Heart left ventricle (tissue), 16 donors: ENCODE measurements at regions of chr11 and their contacts with region 1.

Region 1: DNA sequence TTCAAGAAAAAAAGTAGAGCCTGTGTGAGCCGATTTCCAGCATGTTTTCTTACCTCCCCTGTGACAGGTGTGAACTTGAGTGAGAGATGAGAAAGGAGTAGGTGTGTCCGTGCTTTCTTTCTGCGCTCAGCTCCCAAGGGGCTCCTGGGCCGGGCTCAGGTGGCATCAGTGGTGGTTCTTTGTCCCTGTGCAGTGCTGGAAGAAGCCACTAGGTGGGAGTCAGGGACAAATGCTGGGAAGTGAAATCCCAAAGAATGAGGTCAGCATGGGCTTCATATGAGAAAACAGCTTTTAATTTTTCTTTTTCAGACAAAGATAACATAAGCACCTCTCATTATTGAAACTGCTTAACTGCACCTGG is 57.8 kb downstream of the PPFIBP2 start:
- DNase-seq: peak in 4 of 5 donors; percentile 51 to 69 (median 60)
- ATAC-seq: peak in 3 of 4 donors; percentile 64 to 78 (median 66)
- H3K4me3 ChIP-seq: no peak overlapping the region
- H3K27ac ChIP-seq: peak overlapping the region in 2 of 12 donors; percentile 3 to 17
- H3K4me1 ChIP-seq: peaks cover 6 to 34% (median 23%) of the 10 kb centered on the region in 12 donors
- H3K27me3 ChIP-seq: peaks cover 0 to 9% (median 0%) of the 10 kb centered on the region in 9 donors
- CTCF ChIP-seq: peak; percentile 87 to 96 (median 94)
- POLR2A ChIP-seq: no peak

Region 2: GRCh38 chr11:7600205-7600775 is 28.7 kb after region 1 on chr11:
- intact Hi-C with region 1: no loop called
- DNase-seq: no peak
- ATAC-seq: peak in 3 of 4 donors; percentile 50 to 68 (median 51)
- H3K4me3 ChIP-seq: no peak overlapping the region
- H3K27ac ChIP-seq: no peak overlapping the region
- H3K4me1 ChIP-seq: peaks cover 0 to 5% (median 0%) of the 10 kb centered on the region in 12 donors
- H3K27me3 ChIP-seq: no peaks in the 10 kb centered on the region
- CTCF ChIP-seq: no peak
- POLR2A ChIP-seq: no peak

Region 3: DNA sequence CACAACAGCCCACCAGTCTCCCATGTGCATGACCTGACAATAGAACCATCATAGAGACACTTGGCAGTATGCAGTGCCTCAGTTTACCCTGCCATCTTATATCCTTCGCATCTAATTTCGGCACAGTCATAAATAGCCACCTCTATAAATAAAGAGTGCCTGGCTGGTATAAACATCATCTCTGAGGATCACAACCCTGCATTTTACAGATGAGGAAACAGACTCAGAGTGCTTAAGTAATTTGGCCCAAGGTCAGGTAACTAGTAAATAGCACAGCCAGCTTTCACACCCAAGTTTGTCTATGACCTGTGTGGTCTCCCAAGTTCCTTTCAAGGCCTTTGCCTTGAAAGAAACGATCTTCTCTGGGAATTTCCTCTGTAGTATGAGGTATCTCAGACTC is 57.0 kb after region 1 on chr11:
- intact Hi-C with region 1: loop called in 1 of 10 experiments (anchors 5 kb)
- DNase-seq: no peak
- ATAC-seq: no peak
- H3K4me3 ChIP-seq: no peak overlapping the region
- H3K27ac ChIP-seq: no peak overlapping the region
- H3K4me1 ChIP-seq: peaks cover 0 to 7% (median 0%) of the 10 kb centered on the region in 12 donors
- H3K27me3 ChIP-seq: no peaks in the 10 kb centered on the region
- CTCF ChIP-seq: no peak
- POLR2A ChIP-seq: no peak

Region 4: GRCh38 chr11:7657306-7658025 is 85.8 kb after region 1 on chr11:
- intact Hi-C with region 1: loop called in 7 of 10 experiments (anchors 1 to 2 kb)
- DNase-seq: peak in 3 of 5 donors; percentile 43 to 75 (median 62)
- ATAC-seq: peak; percentile 75 to 98 (median 93)
- H3K4me3 ChIP-seq: no peak overlapping the region
- H3K27ac ChIP-seq: peak overlapping the region in 2 of 12 donors; percentile 31 to 55
- H3K4me1 ChIP-seq: peaks cover 0 to 19% (median 8%) of the 10 kb centered on the region in 12 donors
- H3K27me3 ChIP-seq: no peaks in the 10 kb centered on the region
- CTCF ChIP-seq: peak; percentile 31 to 66 (median 57)
- POLR2A ChIP-seq: no peak

Region 5: GRCh38 chr11:7665473-7666291 is 94.1 kb after region 1 on chr11:
- intact Hi-C with region 1: loop called in 6 of 10 experiments (anchors 2 to 5 kb)
- DNase-seq: peak; percentile 67 to 89 (median 74)
- ATAC-seq: peak; percentile 85 to 97 (median 94)
- H3K4me3 ChIP-seq: no peak overlapping the region
- H3K27ac ChIP-seq: no peak overlapping the region
- H3K4me1 ChIP-seq: peaks cover 0 to 6% (median 0%) of the 10 kb centered on the region in 12 donors
- H3K27me3 ChIP-seq: no peaks in the 10 kb centered on the region
- CTCF ChIP-seq: peak; percentile 61 to 90 (median 82)
- POLR2A ChIP-seq: no peak

Region 6: GRCh38 chr11:7688238-7688826 is 116.7 kb after region 1 on chr11:
- intact Hi-C with region 1: loop called in 4 of 10 experiments (anchors 1 to 10 kb)
- DNase-seq: no peak
- ATAC-seq: peak in 1 of 4 donors; percentile 36
- H3K4me3 ChIP-seq: no peak overlapping the region
- H3K27ac ChIP-seq: no peak overlapping the region
- H3K4me1 ChIP-seq: no peaks in the 10 kb centered on the region
- H3K27me3 ChIP-seq: peaks cover 0 to 20% (median 0%) of the 10 kb centered on the region in 9 donors
- CTCF ChIP-seq: peak; percentile 62 to 79 (median 72)
- POLR2A ChIP-seq: no peak

Region 7: DNA sequence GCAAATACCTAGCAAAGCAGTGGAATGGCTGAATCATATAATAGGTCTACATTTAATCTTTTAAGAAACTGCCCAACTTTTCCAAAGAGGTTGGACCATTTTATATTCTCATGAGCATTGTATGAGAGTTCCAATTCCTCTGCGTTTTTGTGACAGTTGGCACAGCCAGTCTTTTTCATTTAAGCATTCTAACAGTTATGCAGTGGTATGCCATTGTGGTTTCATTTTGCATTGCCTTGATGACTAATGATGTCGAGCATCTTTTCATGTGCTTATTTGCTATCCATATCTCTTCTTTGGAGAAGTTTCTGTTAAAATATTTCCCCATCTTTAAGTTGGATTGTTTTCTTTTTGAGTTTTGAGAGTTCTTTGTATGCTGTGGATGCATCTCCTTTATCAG is 454.2 kb after region 1 on chr11:
- intact Hi-C with region 1: no loop called
- DNase-seq: no peak
- ATAC-seq: no peak
- H3K4me3 ChIP-seq: no peak overlapping the region
- H3K27ac ChIP-seq: no peak overlapping the region
- H3K4me1 ChIP-seq: peaks cover 0 to 12% (median 0%) of the 10 kb centered on the region in 12 donors
- H3K27me3 ChIP-seq: peaks cover 0 to 5% (median 0%) of the 10 kb centered on the region in 9 donors
- CTCF ChIP-seq: no peak
- POLR2A ChIP-seq: no peak

Region 8: GRCh38 chr11:8180469-8180868 is 608.8 kb after region 1 on chr11:
- intact Hi-C with region 1: no loop called
- DNase-seq: no peak
- ATAC-seq: no peak
- H3K4me3 ChIP-seq: no peak overlapping the region
- H3K27ac ChIP-seq: no peak overlapping the region
- H3K4me1 ChIP-seq: no peaks in the 10 kb centered on the region
- H3K27me3 ChIP-seq: peaks cover 0 to 9% (median 0%) of the 10 kb centered on the region in 9 donors
- CTCF ChIP-seq: no peak
- POLR2A ChIP-seq: no peak